ENCODE measurements at regions of chr6 and their contacts with region 1.

Region 1: DNA sequence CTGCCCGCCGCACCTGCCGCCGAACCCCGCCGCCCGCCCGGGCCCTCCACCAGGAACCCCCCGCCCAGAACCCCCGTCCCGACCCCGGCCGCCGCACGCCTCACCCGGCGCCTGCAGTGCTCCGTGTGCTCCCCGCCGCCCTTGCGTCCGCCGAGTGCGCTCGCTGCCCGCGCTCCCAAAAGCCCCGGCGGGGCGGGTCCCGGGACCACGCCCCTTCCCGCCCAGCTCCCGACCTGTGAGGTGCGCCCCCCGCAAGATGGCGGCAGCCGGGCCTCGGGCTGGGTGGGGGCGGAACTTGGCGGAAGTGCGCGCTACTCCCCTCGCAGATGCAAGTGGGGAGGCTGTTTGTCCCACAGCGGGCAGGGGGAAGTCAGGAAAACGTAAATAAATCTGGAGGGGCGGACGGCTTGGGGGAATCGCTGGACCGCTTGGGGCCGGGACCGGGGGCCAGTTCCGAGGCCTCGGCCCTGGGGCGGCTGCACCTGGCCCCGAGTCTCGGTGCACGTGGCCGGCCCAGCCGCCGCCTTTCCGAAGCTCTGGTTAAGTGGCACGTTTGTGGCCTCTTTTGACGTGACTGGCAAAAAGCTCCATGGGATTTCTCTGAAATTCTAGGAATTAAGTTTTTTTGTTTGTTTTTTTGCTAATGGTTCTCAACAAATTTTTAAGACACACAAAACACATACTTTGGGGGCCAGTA is at the start of gene EZR:
- DNase-seq: no peak
- H3K4me3 ChIP-seq: peak within 1 kb of the TSS; percentile 69 to 95 (median 94)
- H3K27ac ChIP-seq: peak within 1 kb of the TSS; percentile 98 to 100 (median 98)
- H3K4me1 ChIP-seq: peaks cover 30 to 41% (median 37%) of the 10 kb centered on the region in 4 donors
- H3K27me3 ChIP-seq: no peaks in the 10 kb centered on the region
- CTCF ChIP-seq: peak in 1 of 3 experiments; percentile 7
- EP300 ChIP-seq: no peak
- POLR2A ChIP-seq: peak; percentile 32
- total RNA-seq, gene EZR: 205 to 226 (median 212) TPM

Region 2: GRCh38 chr6:158595223-158595622 is 224.1 kb before region 1 on chr6:
- intact Hi-C with region 1: no loop called
- DNase-seq: no peak
- H3K4me3 ChIP-seq: no peak overlapping the region
- H3K27ac ChIP-seq: no peak overlapping the region
- H3K4me1 ChIP-seq: no peaks in the 10 kb centered on the region
- H3K27me3 ChIP-seq: no peaks in the 10 kb centered on the region
- CTCF ChIP-seq: peak in 1 of 3 experiments; percentile 8
- EP300 ChIP-seq: no peak
- POLR2A ChIP-seq: no peak

Region 3: DNA sequence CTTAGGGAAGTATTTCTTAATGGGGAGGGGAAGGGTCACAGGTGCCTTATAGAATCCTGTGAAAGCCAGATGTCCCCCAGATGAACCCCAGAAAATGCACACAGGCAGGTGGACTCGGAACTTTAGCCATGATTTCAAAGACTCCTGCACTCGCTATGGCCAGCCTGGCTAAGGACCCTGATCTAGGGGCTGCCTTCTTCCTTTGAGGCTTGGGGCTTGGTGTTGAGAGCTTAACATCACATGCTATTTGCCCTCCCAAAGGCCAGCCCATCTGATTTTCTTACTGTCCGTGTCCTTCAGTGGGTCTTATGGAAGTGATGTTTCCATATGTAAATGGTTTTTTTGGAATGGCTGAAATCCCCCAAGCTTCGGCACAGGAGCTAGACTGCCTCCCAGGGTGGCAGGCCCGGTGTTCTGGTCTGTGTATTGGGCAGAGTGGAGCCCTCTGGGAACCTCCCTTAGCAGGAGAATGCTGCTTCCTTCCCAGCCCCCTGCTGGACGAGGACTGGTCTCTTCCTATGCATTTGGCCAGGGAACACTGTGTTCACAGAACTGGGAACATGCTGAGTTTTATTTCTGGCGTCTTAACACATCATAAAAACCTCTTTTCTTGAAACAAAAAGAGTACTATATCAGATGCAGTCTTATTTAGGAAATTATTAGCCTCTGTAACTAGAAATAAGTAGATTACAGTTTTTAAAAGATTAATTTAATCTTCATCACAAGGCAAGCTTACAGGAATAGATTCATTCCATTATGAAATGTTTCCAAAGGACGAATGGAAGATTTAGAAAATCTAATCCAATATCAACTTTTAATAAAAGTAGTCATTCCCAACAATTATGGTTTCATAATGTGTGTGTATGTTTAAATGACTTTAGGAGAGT is 113.0 kb before region 1 on chr6:
- intact Hi-C with region 1: loop called (anchors 2 kb)
- DNase-seq: no peak
- H3K4me3 ChIP-seq: peak overlapping the region in 1 of 4 donors; percentile 6
- H3K27ac ChIP-seq: peak overlapping the region; percentile 73 to 88 (median 82)
- H3K4me1 ChIP-seq: peaks cover 44 to 56% (median 54%) of the 10 kb centered on the region in 4 donors
- H3K27me3 ChIP-seq: no peaks in the 10 kb centered on the region
- CTCF ChIP-seq: peak; percentile 46 to 63 (median 54)
- EP300 ChIP-seq: no peak
- POLR2A ChIP-seq: no peak

Region 4: GRCh38 chr6:158849899-158850806 is 30.8 kb after region 1 on chr6:
- intact Hi-C with region 1: loop called (anchors 2 kb)
- DNase-seq: no peak
- H3K4me3 ChIP-seq: no peak overlapping the region
- H3K27ac ChIP-seq: peak overlapping the region; percentile 72 to 83 (median 76)
- H3K4me1 ChIP-seq: peaks cover 17 to 59% (median 52%) of the 10 kb centered on the region in 4 donors
- H3K27me3 ChIP-seq: no peaks in the 10 kb centered on the region
- CTCF ChIP-seq: no peak
- EP300 ChIP-seq: no peak
- POLR2A ChIP-seq: no peak

Region 5: DNA sequence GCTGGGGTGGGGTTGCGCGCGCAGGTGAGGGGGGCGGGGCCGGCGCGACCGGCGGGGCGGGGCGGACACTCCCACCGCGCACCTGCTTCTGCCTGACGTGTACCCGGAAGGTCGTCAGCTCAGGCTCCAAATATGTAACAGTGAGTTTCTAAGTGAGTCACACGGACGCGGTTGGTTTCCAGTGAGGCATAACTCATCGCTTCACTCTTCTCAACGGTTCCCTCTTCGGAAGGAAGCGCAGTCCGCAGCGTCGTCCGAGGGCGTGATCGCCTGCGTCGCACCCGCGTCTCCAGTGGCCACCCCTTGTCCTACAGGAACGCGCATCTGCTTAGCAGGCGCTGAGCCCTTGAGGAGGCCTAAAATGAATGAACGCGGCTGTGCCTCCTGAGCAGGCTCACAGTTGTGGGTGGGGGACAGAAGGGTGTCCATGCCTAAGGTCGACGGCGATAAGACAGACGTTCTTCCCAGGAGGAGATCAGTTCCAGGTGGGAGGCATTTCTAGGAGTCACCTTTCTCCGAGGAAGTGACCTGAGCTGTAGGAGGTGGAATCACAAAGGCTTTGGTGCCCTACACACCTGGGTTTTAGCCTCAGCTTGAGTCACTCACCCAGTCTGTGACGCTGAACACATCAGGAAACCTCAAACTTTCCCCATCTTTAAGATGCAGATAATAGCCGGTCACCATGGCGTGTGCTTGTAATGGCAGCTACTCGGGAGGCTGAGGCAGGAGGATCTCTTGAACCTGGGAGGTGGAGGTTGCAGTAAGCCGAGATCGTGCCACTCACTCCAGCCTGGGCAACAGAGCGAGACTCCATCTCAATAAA is 50.7 kb after region 1 on chr6:
- intact Hi-C with region 1: loop called (anchors 2 kb)
- DNase-seq: peak; percentile 97
- H3K4me3 ChIP-seq: peak overlapping the region; percentile 50 to 63 (median 55)
- H3K27ac ChIP-seq: peak overlapping the region; percentile 83 to 91 (median 88)
- H3K4me1 ChIP-seq: peaks cover 5 to 16% (median 14%) of the 10 kb centered on the region in 4 donors
- H3K27me3 ChIP-seq: no peaks in the 10 kb centered on the region
- CTCF ChIP-seq: peak in 2 of 3 experiments; percentile 13 to 27
- EP300 ChIP-seq: peak; percentile 16
- POLR2A ChIP-seq: peak; percentile 39